ENCODE measurements at regions of chr21 and their contacts with region 1.

Region 1: DNA sequence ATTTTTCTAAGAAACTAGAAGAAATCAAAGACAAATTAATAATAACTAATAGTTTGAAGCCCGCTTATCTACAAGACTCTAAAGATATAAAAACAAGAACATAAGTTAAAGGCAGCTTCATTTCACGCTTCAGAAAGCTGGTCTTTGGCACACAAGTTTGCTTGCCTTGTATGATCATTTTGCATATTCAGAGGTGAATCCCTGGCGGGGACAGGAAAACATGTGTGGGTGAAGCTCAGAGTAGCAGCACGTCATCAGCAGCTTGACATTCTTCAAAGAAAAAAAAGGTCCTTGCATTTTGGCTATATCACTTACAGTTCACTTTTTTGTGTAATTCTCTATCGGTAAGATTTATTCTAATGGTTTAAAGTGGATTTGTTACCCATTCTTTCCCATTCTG is 1911.8 kb downstream of the MRPL39 start:
- DNase-seq: no peak
- H3K4me3 ChIP-seq: no peak overlapping the region
- H3K27ac ChIP-seq: no peak overlapping the region
- H3K4me1 ChIP-seq: no peaks in the 10 kb centered on the region
- H3K27me3 ChIP-seq: no peaks in the 10 kb centered on the region
- CTCF ChIP-seq: no peak
- EP300 ChIP-seq: no peak
- POLR2A ChIP-seq: no peak

Region 2: DNA sequence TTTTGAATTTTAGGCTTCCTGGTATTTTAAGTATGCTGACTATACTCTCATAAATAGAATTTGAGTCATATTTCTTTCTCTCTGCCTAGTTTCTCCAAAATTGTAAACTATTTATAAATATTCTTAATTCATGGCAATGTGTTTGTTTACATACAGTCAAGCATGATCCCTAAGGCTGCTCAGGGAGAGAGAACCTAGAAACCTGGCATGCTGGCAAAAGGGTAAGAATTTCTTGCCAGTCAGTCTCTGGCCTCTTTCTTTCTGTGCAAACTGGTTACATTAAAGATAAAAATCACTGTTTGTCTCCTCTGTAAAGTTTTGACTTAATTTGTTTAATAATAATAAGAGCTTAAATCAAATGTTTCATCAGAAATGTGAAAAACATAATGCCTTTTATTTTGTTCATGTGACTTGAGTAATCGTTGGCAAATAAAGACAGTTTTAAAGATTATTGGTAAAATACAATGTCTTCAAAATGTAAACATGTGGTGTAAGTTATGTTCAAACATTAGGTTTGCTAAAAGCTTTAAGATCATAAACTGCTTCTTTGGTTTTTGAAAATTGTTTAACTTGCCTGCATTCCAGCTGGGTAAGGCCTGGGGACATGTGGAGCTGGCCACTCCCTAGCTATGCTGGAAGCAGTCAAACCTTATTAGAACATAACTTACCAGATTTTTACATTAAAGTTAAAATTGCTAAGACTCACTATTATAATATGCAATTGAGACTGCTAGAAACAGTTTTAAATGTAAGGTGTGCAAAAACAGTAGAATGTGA is 1295.5 kb before region 1 on chr21:
- in situ Hi-C with region 1: no loop called
- intact Hi-C with region 1: loop called (anchors 5 kb)
- DNase-seq: no peak
- H3K4me3 ChIP-seq: no peak overlapping the region
- H3K27ac ChIP-seq: no peak overlapping the region
- H3K4me1 ChIP-seq: no peaks in the 10 kb centered on the region
- H3K27me3 ChIP-seq: no peaks in the 10 kb centered on the region
- CTCF ChIP-seq: no peak
- EP300 ChIP-seq: no peak
- POLR2A ChIP-seq: no peak

Region 3: DNA sequence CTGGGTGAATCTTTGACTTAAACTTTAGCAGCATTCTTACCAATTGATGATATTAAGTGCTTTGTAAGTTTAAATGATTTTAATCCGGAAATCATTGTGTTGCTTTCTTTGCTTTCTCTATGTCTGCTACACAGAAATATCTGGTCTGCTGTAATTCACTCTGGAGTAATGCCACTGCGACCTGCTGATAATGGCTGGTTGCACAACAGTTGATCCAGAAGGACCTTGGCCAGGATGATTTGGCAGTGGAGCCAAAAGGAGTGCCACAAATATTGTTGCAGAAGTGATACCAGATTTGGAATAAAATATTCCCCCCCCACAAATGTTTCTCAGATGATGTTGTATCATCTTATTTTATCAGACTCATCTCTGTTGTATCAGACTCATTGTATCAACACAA is 152.1 kb before region 1 on chr21:
- in situ Hi-C with region 1: no loop called
- intact Hi-C with region 1: no loop called
- DNase-seq: no peak
- H3K4me3 ChIP-seq: no peak overlapping the region
- H3K27ac ChIP-seq: no peak overlapping the region
- H3K4me1 ChIP-seq: no peaks in the 10 kb centered on the region
- H3K27me3 ChIP-seq: no peaks in the 10 kb centered on the region
- CTCF ChIP-seq: no peak
- EP300 ChIP-seq: no peak
- POLR2A ChIP-seq: no peak

Region 4: DNA sequence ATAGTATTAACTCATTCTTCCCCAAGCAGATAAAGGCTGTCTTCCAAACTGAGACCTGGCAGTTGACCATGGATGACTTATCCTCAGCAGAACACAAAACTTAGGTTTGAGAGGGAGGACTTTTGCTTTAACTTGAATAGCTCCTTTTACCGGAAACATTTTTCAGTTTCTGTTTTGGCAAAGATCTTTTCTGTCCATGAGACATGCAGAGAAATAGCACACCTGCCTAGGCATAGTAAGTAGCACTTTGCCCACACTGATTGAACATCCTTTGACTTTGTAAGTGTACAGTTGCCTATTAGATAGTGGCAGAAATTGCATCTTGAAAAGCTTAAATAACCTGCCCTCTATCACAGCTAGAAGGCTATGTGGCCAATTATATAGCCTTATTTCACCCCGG is 50.7 kb before region 1 on chr21:
- in situ Hi-C with region 1: no loop called
- intact Hi-C with region 1: no loop called
- DNase-seq: no peak
- H3K4me3 ChIP-seq: no peak overlapping the region
- H3K27ac ChIP-seq: no peak overlapping the region
- H3K4me1 ChIP-seq: no peaks in the 10 kb centered on the region
- H3K27me3 ChIP-seq: no peaks in the 10 kb centered on the region
- CTCF ChIP-seq: no peak
- EP300 ChIP-seq: no peak
- POLR2A ChIP-seq: no peak

Region 5: GRCh38 chr21:23801292-23801691 is 105.8 kb after region 1 on chr21:
- in situ Hi-C with region 1: no loop called
- intact Hi-C with region 1: no loop called
- DNase-seq: no peak
- H3K4me3 ChIP-seq: no peak overlapping the region
- H3K27ac ChIP-seq: no peak overlapping the region
- H3K4me1 ChIP-seq: no peaks in the 10 kb centered on the region
- H3K27me3 ChIP-seq: no peaks in the 10 kb centered on the region
- CTCF ChIP-seq: no peak
- EP300 ChIP-seq: no peak
- POLR2A ChIP-seq: no peak